ENCODE measurements at regions of chr9 and their contacts with region 1.

Region 1: DNA sequence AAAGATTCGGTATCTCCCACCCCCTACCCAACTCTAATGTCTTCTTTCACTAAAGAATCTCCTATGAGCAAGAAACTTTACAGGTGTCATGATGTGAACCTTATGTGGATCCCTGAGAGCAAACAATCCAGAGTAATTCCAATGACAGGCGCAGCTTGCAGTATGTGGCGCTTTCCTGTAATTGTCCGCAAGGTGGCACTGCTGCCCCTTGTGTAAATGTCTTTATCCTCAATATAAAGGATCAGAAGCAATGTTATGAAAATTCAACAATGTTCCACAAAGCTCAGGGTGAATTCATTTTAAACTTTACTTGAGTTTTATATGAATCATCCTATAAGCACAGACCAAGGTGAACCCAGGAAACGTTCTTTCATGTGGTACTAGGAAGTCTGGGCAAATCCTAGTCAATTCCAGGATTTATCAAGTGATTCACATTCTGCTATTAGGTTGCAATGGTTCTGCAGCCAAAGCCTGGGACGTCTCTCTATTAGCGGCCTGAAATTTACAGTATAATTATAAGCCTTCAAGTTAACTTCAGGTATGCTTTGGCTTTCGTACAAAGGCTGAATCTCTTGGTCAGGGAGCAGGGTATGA is 113.7 kb downstream of the TRPM6 start:
- DNase-seq: peak; percentile 56
- H3K4me3 ChIP-seq: no peak overlapping the region; a peak in 1 of 4 replicates
- H3K27ac ChIP-seq: no peak overlapping the region
- H3K4me1 ChIP-seq: no peaks in the 10 kb centered on the region; a peak in 1 of 4 replicates
- H3K27me3 ChIP-seq: no peaks in the 10 kb centered on the region; the same call in 1 of the 2 replicates
- CTCF ChIP-seq: peak; percentile 94
- EP300 ChIP-seq: no peak
- RAD21 ChIP-seq: peak; percentile 89

Region 2: DNA sequence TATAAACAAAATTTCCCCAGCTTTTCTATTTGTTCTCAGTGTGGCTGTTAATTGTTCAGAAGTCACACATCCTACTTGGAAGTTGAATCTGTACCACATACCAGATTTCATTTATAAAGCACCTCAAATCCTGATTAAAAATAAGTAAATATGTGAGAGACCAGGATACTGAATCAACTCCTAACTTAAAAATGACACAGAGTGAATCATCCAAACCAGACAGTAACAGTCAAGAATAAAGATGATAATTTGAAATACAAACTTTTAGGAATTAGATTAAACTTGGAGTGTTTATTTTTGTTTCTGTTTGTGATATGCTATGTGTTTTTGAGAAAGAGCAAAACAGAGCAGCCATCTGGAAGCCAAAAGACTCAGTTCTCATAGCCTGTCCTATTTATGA is 910.1 kb before region 1 on chr9:
- CTCF ChIA-PET with region 1: no interaction called
- POLR2A ChIA-PET with region 1: no interaction called
- DNase-seq: no peak
- H3K4me3 ChIP-seq: no peak overlapping the region
- H3K27ac ChIP-seq: no peak overlapping the region
- H3K4me1 ChIP-seq: no peaks in the 10 kb centered on the region
- H3K27me3 ChIP-seq: no peaks in the 10 kb centered on the region
- CTCF ChIP-seq: no peak
- EP300 ChIP-seq: no peak
- RAD21 ChIP-seq: no peak

Region 3: GRCh38 chr9:74696520-74696919 is 77.5 kb before region 1 on chr9:
- CTCF ChIA-PET with region 1: no interaction called
- POLR2A ChIA-PET with region 1: no interaction called
- DNase-seq: no peak
- H3K4me3 ChIP-seq: no peak overlapping the region
- H3K27ac ChIP-seq: no peak overlapping the region
- H3K4me1 ChIP-seq: no peaks in the 10 kb centered on the region
- H3K27me3 ChIP-seq: no peaks in the 10 kb centered on the region
- CTCF ChIP-seq: no peak; the same call in 1 of the 2 replicates
- EP300 ChIP-seq: no peak
- RAD21 ChIP-seq: no peak

Region 4: GRCh38 chr9:74760031-74760698 is 13.8 kb before region 1 on chr9:
- CTCF ChIA-PET with region 1: interaction called, 13 read pairs
- POLR2A ChIA-PET with region 1: no interaction called
- DNase-seq: no peak
- H3K4me3 ChIP-seq: no peak overlapping the region
- H3K27ac ChIP-seq: no peak overlapping the region
- H3K4me1 ChIP-seq: no peaks in the 10 kb centered on the region
- H3K27me3 ChIP-seq: no peaks in the 10 kb centered on the region
- CTCF ChIP-seq: no peak
- EP300 ChIP-seq: no peak
- RAD21 ChIP-seq: no peak

Region 5: DNA sequence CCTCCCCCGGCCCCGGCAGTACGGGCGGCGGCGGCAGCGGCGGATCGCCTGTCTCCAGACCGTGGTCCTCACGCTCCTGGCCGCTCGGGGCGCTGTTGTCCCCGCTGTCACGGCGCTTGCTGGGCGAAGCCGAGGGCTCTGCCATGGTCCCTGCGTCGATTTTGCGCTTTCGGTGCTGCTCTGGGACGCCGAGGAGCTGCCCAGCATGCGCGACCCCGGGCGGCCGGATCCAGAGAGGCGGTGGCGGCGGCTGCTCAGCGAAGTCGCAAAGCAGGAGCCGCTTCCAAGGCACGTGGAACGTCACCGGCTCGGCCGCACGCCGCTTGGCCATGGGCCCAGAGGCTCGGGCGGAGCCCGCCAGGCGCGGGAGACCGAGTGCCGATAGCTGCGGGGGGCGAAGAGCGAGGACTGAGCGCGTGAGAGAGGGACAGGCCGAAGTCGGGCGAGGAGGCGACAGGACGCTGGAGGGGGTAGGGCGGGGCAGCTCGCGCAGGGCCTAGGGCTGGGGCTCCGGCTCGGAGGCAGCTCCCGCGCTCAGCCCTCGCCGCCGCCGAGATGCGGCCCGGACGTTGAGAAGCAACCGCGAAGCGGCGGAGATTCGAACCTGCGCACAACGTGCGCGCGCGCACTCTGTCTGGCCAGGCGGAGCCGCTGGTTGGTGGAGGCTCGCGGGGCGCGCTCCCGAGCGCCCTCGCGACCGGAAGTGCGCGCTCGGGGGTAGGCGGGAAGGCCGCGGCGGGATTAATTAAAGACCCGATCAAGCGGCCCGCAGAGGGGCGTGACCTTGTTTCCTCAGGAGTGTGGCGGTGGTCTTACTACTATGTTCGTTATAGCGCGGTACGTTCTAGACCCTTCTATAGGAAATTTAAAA is 178.5 kb after region 1 on chr9 and contains the start of gene C9orf40:
- CTCF ChIA-PET with region 1: interaction called, 13 read pairs
- POLR2A ChIA-PET with region 1: no interaction called
- DNase-seq: peak; percentile 92
- H3K4me3 ChIP-seq: peak within 1 kb of the TSS; percentile 85 to 97
- H3K27ac ChIP-seq: peak within 1 kb of the TSS; percentile 68 to 74
- H3K4me1 ChIP-seq: no peaks in the 10 kb centered on the region; a peak in 1 of 4 replicates
- H3K27me3 ChIP-seq: no peaks in the 10 kb centered on the region
- CTCF ChIP-seq: peak; percentile 72
- EP300 ChIP-seq: no peak
- RAD21 ChIP-seq: peak; percentile 33
- polyA plus RNA-seq, gene C9orf40: 2.0 TPM in 2 replicates

Region 6: GRCh38 chr9:75001719-75002422 is 227.9 kb after region 1 on chr9:
- CTCF ChIA-PET with region 1: interaction called, 159 read pairs
- POLR2A ChIA-PET with region 1: no interaction called
- DNase-seq: peak; percentile 44
- H3K4me3 ChIP-seq: no peak overlapping the region; a peak in 1 of 4 replicates
- H3K27ac ChIP-seq: no peak overlapping the region
- H3K4me1 ChIP-seq: no peaks in the 10 kb centered on the region
- H3K27me3 ChIP-seq: no peaks in the 10 kb centered on the region
- CTCF ChIP-seq: peak; percentile 83
- EP300 ChIP-seq: no peak
- RAD21 ChIP-seq: peak; percentile 84

Region 7: DNA sequence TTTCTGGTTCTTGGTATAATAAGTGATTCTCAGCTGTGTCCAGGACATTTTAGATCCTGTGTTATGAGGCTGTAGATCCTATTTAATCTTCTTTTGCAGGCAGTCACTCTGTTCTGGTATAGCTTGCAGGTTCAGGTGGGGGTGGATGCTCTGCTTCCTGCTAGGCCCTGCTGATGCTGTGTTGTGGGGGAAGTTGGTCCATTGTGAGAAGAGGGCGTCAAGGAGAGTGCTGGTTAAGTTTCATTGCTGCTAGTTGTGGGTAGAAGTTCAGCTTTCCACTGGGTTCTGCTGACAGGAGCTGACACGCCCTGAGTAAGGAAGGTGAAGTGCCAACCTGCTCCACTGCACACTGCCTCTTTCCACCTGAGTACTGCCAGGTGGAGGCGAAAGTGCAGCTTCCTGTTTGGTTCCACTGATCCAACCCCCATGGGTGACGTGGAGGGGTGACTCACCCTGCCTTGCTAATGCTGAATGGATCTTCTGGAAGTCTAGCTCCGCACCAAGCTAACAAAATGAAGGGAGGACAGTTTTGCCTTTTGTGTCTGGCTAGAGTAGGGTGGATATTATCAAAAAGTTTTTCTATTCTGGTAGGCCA is 297.6 kb after region 1 on chr9:
- CTCF ChIA-PET with region 1: interaction called, 85 read pairs
- POLR2A ChIA-PET with region 1: no interaction called
- DNase-seq: no peak
- H3K4me3 ChIP-seq: no peak overlapping the region
- H3K27ac ChIP-seq: no peak overlapping the region
- H3K4me1 ChIP-seq: no peaks in the 10 kb centered on the region
- H3K27me3 ChIP-seq: no peaks in the 10 kb centered on the region
- CTCF ChIP-seq: no peak
- EP300 ChIP-seq: no peak
- RAD21 ChIP-seq: no peak

Region 8: DNA sequence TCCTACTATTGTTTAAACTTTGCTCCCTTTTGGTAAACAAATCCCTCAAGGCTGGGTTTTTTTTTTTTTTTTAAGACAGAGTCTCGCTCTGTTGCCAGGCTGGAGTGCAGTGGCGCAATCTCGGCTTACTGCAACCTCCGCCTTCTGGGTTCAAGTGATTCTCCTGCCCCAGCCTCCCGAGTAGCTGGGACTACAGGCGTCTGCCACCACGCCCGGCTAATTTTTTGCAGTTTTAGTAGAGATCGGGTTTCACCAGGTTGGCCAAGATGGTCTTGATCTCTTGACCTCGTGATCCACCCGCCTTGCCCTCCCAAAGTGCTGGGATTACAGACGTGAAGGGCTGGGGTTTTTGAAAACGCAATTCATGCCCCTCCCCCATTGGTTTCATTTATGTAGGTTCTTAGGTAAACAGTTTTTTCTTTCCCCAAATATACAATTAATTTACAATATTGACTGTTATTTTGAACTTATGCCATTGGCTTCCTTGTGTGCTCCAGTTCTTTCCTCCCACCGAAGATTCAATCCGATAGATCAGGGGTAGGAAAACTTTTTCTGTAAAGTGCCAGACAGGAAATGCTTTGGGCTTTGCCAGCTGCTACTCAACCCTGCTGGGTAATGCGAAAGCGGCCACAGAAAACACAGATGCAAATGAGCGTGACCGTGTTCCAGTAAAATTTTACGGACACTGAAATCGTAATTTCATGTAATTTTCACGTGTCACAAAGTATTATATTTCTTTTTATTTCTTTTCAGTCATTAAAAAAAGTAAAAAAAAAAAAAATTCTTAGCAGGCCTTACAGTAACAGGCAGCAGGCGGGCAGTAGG is 313.1 kb after region 1 on chr9:
- CTCF ChIA-PET with region 1: interaction called, 27 read pairs
- POLR2A ChIA-PET with region 1: no interaction called
- DNase-seq: no peak
- H3K4me3 ChIP-seq: peak overlapping the region; percentile 60 to 98
- H3K27ac ChIP-seq: peak overlapping the region in 1 of 2 experiments; percentile 45; a peak in 1 of 4 replicates
- H3K4me1 ChIP-seq: peaks cover 4 to 6% of the 10 kb centered on the region in 2 experiments; a peak in 2 of 4 replicates
- H3K27me3 ChIP-seq: no peaks in the 10 kb centered on the region
- CTCF ChIP-seq: no peak
- EP300 ChIP-seq: no peak
- RAD21 ChIP-seq: no peak